Activated naive CD4-positive, alpha-beta T cell treated with anti-CD3 and anti-CD28 coated beads for 36 hours (primary cell): ENCODE measurements at regions of chr13 and their contacts with region 1.

Region 1: GRCh38 chr13:77285098-77285497 is 41.8 kb downstream of the MYCBP2 start:
- DNase-seq: no peak
- H3K4me3 Mint-ChIP-seq: no peak overlapping the region
- H3K27ac Mint-ChIP-seq: no peak overlapping the region
- H3K4me1 Mint-ChIP-seq: peaks cover 42% of the 10 kb centered on the region
- H3K27me3 Mint-ChIP-seq: no peaks in the 10 kb centered on the region

Region 2: DNA sequence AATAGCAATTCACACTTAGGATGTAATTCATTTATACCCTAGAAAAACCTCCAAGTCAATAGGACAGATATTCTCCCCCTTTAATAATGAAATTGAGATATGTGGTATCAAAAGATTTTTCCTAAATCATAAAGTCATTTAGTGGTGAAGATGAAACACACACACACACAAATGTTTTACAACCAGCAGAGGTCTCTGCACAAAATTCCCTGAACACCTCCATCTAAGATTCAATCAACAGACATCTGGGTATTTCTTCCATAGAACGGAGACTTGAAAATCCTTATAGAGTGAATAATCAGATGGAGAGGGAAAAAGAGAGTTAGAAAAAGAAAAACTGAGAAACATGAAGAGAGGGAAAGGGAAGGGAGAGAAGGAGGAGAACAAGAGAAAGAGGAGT is 11.0 kb before region 1 on chr13:
- CTCF ChIA-PET with region 1: interaction called, 3 read pairs
- intact Hi-C with region 1: loop called (anchors 2 kb)
- DNase-seq: no peak
- H3K4me3 Mint-ChIP-seq: no peak overlapping the region
- H3K27ac Mint-ChIP-seq: no peak overlapping the region
- H3K4me1 Mint-ChIP-seq: peaks cover 14% of the 10 kb centered on the region
- H3K27me3 Mint-ChIP-seq: no peaks in the 10 kb centered on the region